Activated T-helper 1 cell treated with anti-CD3 and anti-CD28 coated beads, Interleukin-12 subunit alpha, Interleukin-12 subunit beta, Interleukin-2, Interleukin-4 antibody, amounts not matched to agents 30 ng/mL and 10 ng/mL and 1 ng/mL, durations not matched to agents 14 hours and 24 hours and 36 hours (primary cell): ENCODE measurements at regions of chr2 and their contacts with region 1.

Region 1: GRCh38 chr2:165293440-165294353 is 54.5 kb downstream of the SCN2A start:
- DNase-seq: peak; percentile 55
- H3K4me3 Mint-ChIP-seq: no peak overlapping the region
- H3K27ac Mint-ChIP-seq: no peak overlapping the region
- H3K4me1 Mint-ChIP-seq: no peaks in the 10 kb centered on the region
- H3K27me3 Mint-ChIP-seq: peaks cover 9% of the 10 kb centered on the region

Region 2: GRCh38 chr2:164737612-164738081 is 556.0 kb before region 1 on chr2:
- intact Hi-C with region 1: loop called (anchors 1 kb)
- DNase-seq: no peak
- H3K4me3 Mint-ChIP-seq: no peak overlapping the region
- H3K27ac Mint-ChIP-seq: no peak overlapping the region
- H3K4me1 Mint-ChIP-seq: no peaks in the 10 kb centered on the region
- H3K27me3 Mint-ChIP-seq: peaks cover 7% of the 10 kb centered on the region

Region 3: DNA sequence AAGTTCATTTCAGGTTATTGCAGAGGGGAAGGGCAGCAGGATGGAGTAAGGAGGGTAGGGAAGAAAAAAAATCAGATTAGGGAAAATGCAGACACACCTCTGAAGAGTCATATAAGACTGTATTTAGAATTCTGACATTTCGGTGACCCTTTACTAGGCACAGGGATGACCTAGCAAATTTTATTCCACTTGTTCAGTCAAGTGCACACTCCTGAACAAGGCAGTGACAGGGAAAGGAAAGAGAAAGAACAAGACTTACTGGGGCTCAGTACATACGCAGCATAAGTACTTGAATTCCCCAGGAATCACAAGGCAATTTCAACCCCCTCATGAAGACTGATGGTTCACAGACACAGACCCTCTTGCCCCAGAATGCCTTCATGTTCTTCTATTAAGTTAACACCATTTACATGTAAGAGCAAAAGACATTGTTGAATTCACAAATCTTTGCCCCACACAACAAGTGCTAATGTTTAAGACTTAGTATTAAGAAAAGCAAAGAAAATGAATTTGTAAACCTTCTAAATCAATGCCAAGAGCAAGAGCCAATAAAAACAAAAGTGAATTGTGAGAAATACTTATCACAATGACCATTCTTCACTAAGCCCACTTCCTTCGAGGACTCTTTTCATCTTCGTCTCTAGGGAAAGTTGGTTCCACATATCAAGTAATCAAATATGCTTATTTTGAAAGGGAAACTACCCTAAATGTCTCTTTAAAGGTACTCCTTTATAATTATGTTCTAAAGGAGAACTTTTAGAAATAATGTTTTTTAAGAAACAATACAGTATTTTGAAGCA is 499.1 kb before region 1 on chr2:
- intact Hi-C with region 1: no loop called
- DNase-seq: no peak
- H3K4me3 Mint-ChIP-seq: no peak overlapping the region
- H3K27ac Mint-ChIP-seq: no peak overlapping the region
- H3K4me1 Mint-ChIP-seq: no peaks in the 10 kb centered on the region
- H3K27me3 Mint-ChIP-seq: no peaks in the 10 kb centered on the region

Region 4: DNA sequence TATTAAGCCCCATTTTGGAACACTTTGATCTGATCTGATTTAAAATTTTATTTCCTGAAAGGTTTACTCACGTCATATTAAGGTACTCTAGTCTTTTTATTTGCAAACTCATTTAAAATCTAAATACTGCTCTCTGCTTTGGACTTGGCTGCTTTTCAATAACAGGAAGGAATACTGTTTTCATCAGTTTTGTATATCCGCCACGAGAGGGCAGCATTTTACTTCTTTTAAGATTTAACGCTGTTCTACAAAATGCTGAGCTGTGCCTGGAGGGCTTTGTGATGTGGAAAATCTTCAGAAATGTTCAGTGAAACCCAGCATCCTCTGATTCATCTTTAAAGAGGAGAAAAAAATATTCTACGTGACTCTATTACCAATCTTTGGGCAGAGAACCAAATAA is 300.9 kb before region 1 on chr2:
- intact Hi-C with region 1: loop called (anchors 1 kb)
- DNase-seq: peak; percentile 33
- H3K4me3 Mint-ChIP-seq: no peak overlapping the region
- H3K27ac Mint-ChIP-seq: no peak overlapping the region
- H3K4me1 Mint-ChIP-seq: peaks cover 39% of the 10 kb centered on the region
- H3K27me3 Mint-ChIP-seq: no peaks in the 10 kb centered on the region

Region 5: GRCh38 chr2:165015052-165015642 is 278.6 kb before region 1 on chr2:
- intact Hi-C with region 1: loop called (anchors 2 kb)
- DNase-seq: peak; percentile 10
- H3K4me3 Mint-ChIP-seq: no peak overlapping the region
- H3K27ac Mint-ChIP-seq: no peak overlapping the region
- H3K4me1 Mint-ChIP-seq: no peaks in the 10 kb centered on the region
- H3K27me3 Mint-ChIP-seq: peaks cover 4% of the 10 kb centered on the region

Region 6: GRCh38 chr2:165239230-165239629 is 54.5 kb before region 1 on chr2 and contains the start of gene SCN2A:
- intact Hi-C with region 1: loop called (anchors 1 kb)
- DNase-seq: no peak
- H3K4me3 Mint-ChIP-seq: no peak within 1 kb of the TSS
- H3K27ac Mint-ChIP-seq: no peak within 1 kb of the TSS
- H3K4me1 Mint-ChIP-seq: no peaks in the 10 kb centered on the region
- H3K27me3 Mint-ChIP-seq: no peaks in the 10 kb centered on the region
- total RNA-seq, gene SCN2A: not detected in 2 replicates

Region 7: DNA sequence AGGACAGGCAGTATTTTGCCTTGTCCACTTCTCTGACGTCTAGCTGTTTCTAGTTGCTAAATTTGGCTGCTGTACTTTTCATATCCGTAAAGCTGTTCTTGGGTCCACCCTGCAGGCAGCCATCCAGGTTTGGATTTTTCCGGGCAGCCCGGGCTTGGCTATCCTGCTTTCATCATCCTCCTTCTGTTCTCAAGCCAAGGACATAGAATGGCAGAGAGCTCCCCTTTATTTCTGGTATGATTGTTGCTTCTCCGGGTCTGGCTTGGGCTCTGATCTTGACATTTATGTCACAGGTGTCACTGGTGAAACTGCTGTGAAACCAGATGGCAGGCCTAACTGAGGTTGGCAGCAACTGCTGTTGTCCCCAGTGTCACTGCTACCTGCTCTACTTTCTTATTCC is 19.0 kb before region 1 on chr2:
- intact Hi-C with region 1: loop called (anchors 2 kb)
- DNase-seq: no peak
- H3K4me3 Mint-ChIP-seq: no peak overlapping the region
- H3K27ac Mint-ChIP-seq: no peak overlapping the region
- H3K4me1 Mint-ChIP-seq: peaks cover 5% of the 10 kb centered on the region
- H3K27me3 Mint-ChIP-seq: no peaks in the 10 kb centered on the region

Region 8: DNA sequence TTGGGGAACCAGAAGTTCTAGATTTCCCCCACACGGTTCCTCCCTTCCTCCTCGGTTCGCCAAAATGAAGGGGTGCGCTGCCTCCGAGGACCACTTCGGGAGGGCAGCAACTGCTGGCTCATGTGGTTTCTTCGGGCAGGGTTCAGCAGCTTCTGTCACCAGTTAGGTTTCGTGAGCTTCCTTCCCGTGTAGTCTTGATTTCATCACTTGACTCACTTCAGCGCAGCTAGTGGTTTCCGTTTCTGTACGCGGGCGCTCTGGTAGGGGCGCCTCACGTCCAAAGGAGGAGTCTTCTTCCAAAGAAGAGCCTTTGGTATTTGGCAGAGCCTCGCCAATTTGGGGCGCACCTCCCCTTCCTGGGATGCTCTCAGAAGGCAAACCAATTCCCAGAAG is 500.8 kb after region 1 on chr2:
- intact Hi-C with region 1: loop called (anchors 10 kb)
- DNase-seq: peak; percentile 71
- H3K4me3 Mint-ChIP-seq: peak overlapping the region; percentile 89
- H3K27ac Mint-ChIP-seq: peak overlapping the region; percentile 90
- H3K4me1 Mint-ChIP-seq: peaks cover 40% of the 10 kb centered on the region
- H3K27me3 Mint-ChIP-seq: peaks cover 2% of the 10 kb centered on the region